Naive thymus-derived CD4-positive, alpha-beta T cell (primary cell): ENCODE measurements at regions of chr9 and their contacts with region 1.

Region 1: GRCh38 chr9:15475923-15476536 is 34.7 kb downstream of the PSIP1 start:
- DNase-seq: no peak
- ATAC-seq: no peak
- H3K4me3 ChIP-seq: no peak overlapping the region
- H3K4me3 Mint-ChIP-seq: no peak overlapping the region
- H3K27ac ChIP-seq: peak overlapping the region; percentile 15
- H3K27ac Mint-ChIP-seq: peak overlapping the region in 5 of 9 donors; percentile 20 to 54 (median 28)
- H3K4me1 ChIP-seq: peaks cover 0 to 4% of the 10 kb centered on the region in 2 donors
- H3K4me1 Mint-ChIP-seq: peaks cover 4 to 41% (median 30%) of the 10 kb centered on the region in 7 donors
- H3K27me3 ChIP-seq: no peaks in the 10 kb centered on the region
- H3K27me3 Mint-ChIP-seq: no peaks in the 10 kb centered on the region

Region 2: DNA sequence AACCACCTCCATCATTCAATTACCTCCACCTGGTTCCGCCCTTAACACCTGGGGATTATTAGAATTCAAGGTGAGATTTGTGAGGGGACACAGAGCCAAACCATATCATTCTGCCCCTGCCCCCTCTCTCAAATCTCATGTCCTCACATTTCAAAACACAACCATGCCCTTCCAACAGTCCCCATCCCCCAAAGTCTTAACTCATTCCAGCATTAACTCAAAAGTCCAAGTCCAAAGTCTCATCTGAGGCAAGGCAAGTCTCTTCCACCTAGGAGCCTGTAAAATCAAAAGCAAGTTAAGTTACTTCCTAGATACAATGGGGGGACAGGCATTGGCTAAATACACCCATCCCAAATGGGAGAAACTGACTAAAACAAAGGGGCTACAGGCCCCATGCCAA is 15.9 kb after region 1 on chr9:
- CTCF ChIA-PET with region 1: interaction called, 4 read pairs
- POLR2A ChIA-PET with region 1: interaction called, 4 read pairs
- intact Hi-C with region 1: loop called in 1 of 2 experiments (anchors 2 kb)
- DNase-seq: no peak
- ATAC-seq: no peak
- H3K4me3 ChIP-seq: no peak overlapping the region
- H3K4me3 Mint-ChIP-seq: peak overlapping the region in 5 of 10 donors; percentile 14 to 51 (median 17)
- H3K27ac ChIP-seq: no peak overlapping the region
- H3K27ac Mint-ChIP-seq: peak overlapping the region; percentile 2 to 71 (median 39)
- H3K4me1 ChIP-seq: no peaks in the 10 kb centered on the region
- H3K4me1 Mint-ChIP-seq: peaks cover 21 to 68% (median 57%) of the 10 kb centered on the region in 7 donors
- H3K27me3 ChIP-seq: no peaks in the 10 kb centered on the region
- H3K27me3 Mint-ChIP-seq: no peaks in the 10 kb centered on the region